ENCODE measurements at regions of chr7 and their contacts with region 1.

Region 1: GRCh38 chr7:141014524-141015395 is at the start of gene MRPS33:
- DNase-seq: peak; percentile 93 to 97
- ATAC-seq: peak; percentile 100
- H3K4me3 ChIP-seq: peak within 1 kb of the TSS; percentile 56 to 82 (median 70)
- H3K27ac ChIP-seq: peak within 1 kb of the TSS; percentile 74 to 95 (median 92)
- H3K4me1 ChIP-seq: peaks cover 0 to 21% (median 14%) of the 10 kb centered on the region in 9 donors
- H3K27me3 ChIP-seq: peaks cover 0 to 38% (median 0%) of the 10 kb centered on the region in 7 donors
- CTCF ChIP-seq: peak in 8 of 9 donors; percentile 12 to 77 (median 56)
- total RNA-seq, gene MRPS33: 95.8 to 151 (median 138) TPM

Region 2: DNA sequence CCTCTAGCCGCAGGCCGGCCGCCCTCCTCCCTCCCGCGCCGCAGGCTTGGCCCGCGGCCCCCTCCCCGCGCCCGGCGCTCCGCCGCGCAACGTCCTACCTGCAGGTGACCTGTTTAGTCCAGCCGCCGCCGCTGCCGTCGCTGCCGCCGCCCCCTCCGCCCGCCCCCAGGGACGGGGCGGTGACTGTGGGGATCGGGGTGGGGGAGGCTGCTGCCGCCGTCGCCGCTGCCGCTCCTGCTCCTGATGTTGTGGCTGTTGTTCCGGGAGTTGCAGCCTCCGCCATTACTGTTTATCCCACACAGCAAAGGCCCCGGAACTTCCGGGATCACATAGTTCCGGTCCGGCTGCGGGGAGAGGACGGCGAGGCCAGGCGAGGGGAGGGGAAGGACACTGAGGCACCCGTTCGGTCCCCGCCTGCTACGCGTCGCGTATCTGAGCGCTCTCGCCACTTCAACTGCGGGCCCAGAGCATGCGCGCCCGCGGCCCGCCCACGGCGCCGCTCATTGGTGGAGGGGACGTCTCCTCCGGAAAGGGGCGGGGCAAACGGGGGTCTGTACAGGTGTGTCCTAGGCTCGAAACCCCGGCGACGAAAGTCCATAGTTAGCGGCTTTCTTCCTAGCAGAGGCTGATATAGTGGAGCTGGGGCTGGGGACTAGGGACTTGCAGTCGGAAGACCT is 535.6 kb before region 1 on chr7 and contains the start of gene MKRN1:
- intact Hi-C with region 1: loop called in 2 of 10 experiments (anchors 10 kb)
- DNase-seq: peak; percentile 93 to 94
- ATAC-seq: peak; percentile 96 to 99 (median 99)
- H3K4me3 ChIP-seq: peak within 1 kb of the TSS; percentile 69 to 99 (median 96)
- H3K27ac ChIP-seq: peak within 1 kb of the TSS; percentile 16 to 94 (median 90)
- H3K4me1 ChIP-seq: peaks cover 4 to 38% (median 27%) of the 10 kb centered on the region in 9 donors
- H3K27me3 ChIP-seq: no peaks in the 10 kb centered on the region
- CTCF ChIP-seq: peak in 1 of 9 donors; percentile 11
- total RNA-seq, gene MKRN1: 80.6 to 113 (median 92.0) TPM

Region 3: DNA sequence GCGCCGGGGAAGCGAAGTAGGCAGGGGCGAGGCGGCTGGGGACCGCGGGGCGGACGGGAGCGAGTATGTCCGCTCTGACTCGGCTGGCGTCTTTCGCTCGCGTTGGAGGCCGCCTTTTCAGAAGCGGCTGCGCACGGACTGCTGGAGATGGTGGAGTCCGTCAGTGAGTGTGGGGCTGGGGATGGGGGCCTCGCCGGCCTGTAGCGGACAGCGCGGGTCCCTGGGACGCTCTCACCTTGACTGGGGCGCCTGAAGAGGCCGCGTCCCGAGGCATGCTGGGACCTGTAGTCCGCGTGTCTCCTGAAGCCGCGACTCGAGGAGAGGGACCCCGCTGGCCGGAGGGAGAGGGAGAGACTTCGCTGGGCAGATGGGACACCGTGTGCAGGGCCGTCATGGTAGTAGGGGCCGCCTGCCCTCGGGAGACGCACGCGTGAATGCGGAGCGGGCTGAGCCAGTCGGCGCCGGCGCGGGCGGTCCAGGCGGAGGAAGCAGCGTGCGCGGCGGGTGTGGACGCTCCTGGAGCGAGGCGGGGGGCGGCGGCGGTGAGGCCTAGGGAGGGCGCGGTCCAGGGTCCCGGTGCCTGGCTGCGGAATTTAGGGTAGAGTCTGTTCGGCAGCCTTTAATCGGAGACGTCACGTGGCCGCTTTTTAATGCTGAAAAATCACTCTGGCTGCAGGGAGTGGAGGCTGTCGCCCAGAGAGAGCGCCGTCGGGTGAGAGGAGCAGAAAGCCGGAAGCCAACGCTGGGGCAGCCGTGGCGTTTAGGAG is 317.9 kb before region 1 on chr7 and contains the start of gene NDUFB2:
- intact Hi-C with region 1: loop called in 1 of 10 experiments (anchors 10 kb)
- DNase-seq: peak; percentile 50 to 53
- ATAC-seq: peak; percentile 91 to 97 (median 94)
- H3K4me3 ChIP-seq: peak within 1 kb of the TSS; percentile 48 to 96 (median 79)
- H3K27ac ChIP-seq: peak within 1 kb of the TSS; percentile 81 to 99 (median 95)
- H3K4me1 ChIP-seq: peaks cover 5 to 31% (median 27%) of the 10 kb centered on the region in 9 donors
- H3K27me3 ChIP-seq: no peaks in the 10 kb centered on the region
- CTCF ChIP-seq: no peak
- total RNA-seq, gene NDUFB2: 526 to 798 (median 653) TPM

Region 4: DNA sequence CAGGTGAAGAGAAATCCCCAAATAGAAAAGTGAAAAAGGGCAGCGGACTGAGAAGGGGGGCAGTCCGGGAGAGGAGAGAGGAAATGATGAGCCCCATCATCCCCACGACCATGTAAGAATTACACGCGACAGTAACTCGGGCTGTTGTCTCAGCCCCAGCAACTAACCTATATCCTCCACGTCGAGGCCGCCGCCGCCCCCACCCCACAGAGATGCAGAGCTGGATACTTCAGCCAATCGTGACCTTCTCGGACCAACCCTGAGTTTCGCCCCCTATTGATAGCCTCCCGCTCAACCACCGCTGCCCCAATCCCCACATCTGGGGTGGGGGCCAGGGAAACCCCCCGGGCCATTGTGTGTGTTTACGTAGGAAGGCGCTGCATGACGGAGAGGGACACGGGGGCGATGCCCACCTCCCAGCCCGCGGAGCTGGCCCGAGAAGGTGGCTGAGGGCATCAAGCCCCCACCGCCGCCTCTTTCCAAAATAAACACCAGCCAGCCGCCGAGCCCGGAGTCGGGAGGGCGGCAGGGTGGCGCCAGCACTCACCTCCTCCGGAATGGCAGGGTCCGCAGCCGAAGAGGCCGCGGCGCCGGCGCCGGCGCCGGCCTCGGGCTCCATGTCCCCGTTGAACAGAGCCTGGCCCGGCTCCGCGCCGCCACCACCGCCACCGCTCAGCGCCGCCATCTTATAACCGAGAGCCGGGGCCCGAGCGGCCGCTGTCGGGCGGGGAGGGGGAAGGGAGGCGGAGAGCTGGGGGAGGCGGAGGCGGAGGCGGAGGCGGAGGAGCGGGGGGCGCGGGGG is 90.5 kb before region 1 on chr7:
- intact Hi-C with region 1: loop called in 4 of 10 experiments (anchors 5 to 10 kb)
- DNase-seq: peak; percentile 76 to 82
- ATAC-seq: peak; percentile 76 to 89 (median 80)
- H3K4me3 ChIP-seq: peak overlapping the region; percentile 81 to 99 (median 96)
- H3K27ac ChIP-seq: peak overlapping the region; percentile 96 to 100 (median 99)
- H3K4me1 ChIP-seq: peaks cover 5 to 45% (median 39%) of the 10 kb centered on the region in 9 donors
- H3K27me3 ChIP-seq: no peaks in the 10 kb centered on the region
- CTCF ChIP-seq: peak in 6 of 9 donors; percentile 37 to 71 (median 57)

Region 5: DNA sequence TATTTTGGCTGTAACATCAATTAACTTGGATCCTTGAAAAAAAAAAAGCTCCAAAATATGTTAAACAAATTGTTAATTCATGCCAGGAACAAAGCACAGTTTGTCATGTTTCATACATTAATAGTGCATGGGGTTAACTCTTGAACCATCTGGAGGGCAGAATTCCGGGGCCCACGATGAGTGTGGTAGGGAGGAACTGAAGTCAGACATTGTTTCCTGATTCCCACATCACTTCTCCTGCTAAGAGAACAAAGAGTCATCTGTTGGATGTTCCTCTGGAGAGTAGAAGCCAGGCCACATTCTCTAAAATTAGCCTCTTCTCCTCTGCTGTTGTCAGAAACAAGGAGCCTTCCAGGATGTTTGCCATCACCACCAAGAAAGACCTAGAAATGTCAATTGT is 113.7 kb after region 1 on chr7:
- intact Hi-C with region 1: no loop called
- DNase-seq: no peak
- ATAC-seq: no peak
- H3K4me3 ChIP-seq: no peak overlapping the region
- H3K27ac ChIP-seq: no peak overlapping the region
- H3K4me1 ChIP-seq: peaks cover 0 to 5% (median 0%) of the 10 kb centered on the region in 9 donors
- H3K27me3 ChIP-seq: no peaks in the 10 kb centered on the region
- CTCF ChIP-seq: no peak

Region 6: GRCh38 chr7:141178486-141179135 is 163.9 kb after region 1 on chr7:
- intact Hi-C with region 1: no loop called
- DNase-seq: no peak
- ATAC-seq: no peak
- H3K4me3 ChIP-seq: no peak overlapping the region
- H3K27ac ChIP-seq: no peak overlapping the region
- H3K4me1 ChIP-seq: no peaks in the 10 kb centered on the region
- H3K27me3 ChIP-seq: no peaks in the 10 kb centered on the region
- CTCF ChIP-seq: no peak

Region 7: DNA sequence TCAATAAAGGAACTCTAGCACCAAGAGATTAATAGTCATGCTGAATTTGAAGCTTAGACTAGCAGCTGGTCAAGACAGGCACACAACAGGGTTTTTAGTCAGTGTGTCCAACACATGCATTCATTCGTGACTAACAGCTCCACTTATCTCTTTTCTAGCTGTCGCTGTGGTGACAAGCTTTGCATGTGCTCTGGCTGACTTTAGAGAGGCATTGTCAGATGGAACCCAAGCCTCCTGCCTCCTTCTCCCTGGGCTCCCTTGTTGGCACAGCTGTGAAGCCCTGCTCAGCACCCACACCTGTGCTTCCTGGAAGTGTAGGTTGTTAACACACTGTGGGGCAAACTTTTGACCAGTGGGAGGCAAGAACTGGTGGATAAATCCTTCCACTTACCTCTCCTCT is 526.6 kb after region 1 on chr7:
- intact Hi-C with region 1: loop called in 4 of 10 experiments (anchors 10 kb)
- DNase-seq: no peak
- ATAC-seq: peak in 3 of 8 donors; percentile 41 to 61 (median 59)
- H3K4me3 ChIP-seq: no peak overlapping the region
- H3K27ac ChIP-seq: no peak overlapping the region
- H3K4me1 ChIP-seq: no peaks in the 10 kb centered on the region
- H3K27me3 ChIP-seq: peaks cover 0 to 8% (median 0%) of the 10 kb centered on the region in 7 donors
- CTCF ChIP-seq: no peak

Measured in heart right ventricle (tissue), 16 donors.